Naive thymus-derived CD4-positive, alpha-beta T cell (primary cell): ENCODE measurements at regions of chr7 and their contacts with region 1.

Region 1: DNA sequence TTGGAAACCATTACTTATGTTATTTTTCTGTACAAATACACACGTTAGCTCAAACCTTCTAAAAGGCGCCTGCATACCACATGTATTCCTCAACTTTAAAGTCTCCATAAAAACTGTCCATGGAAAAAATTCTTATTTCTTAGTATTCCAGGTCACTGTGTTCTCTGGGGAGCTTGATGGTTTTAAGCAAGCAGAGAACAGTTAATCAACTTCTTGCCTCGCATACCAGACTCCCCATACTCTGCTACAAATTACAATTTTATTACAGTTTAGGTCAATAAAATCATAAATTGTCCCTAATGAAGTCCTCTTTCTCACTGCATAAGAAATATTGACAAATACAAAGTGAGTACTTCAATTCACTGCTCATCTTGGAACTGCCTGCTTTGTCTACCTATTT is 77.0 kb upstream of the GPR22 start:
- DNase-seq: no peak
- ATAC-seq: no peak
- H3K4me3 ChIP-seq: no peak overlapping the region
- H3K4me3 Mint-ChIP-seq: no peak overlapping the region
- H3K27ac ChIP-seq: no peak overlapping the region
- H3K27ac Mint-ChIP-seq: no peak overlapping the region
- H3K4me1 ChIP-seq: no peaks in the 10 kb centered on the region
- H3K4me1 Mint-ChIP-seq: peaks cover 0 to 5% (median 0%) of the 10 kb centered on the region in 7 donors
- H3K27me3 ChIP-seq: no peaks in the 10 kb centered on the region
- H3K27me3 Mint-ChIP-seq: no peaks in the 10 kb centered on the region

Region 2: DNA sequence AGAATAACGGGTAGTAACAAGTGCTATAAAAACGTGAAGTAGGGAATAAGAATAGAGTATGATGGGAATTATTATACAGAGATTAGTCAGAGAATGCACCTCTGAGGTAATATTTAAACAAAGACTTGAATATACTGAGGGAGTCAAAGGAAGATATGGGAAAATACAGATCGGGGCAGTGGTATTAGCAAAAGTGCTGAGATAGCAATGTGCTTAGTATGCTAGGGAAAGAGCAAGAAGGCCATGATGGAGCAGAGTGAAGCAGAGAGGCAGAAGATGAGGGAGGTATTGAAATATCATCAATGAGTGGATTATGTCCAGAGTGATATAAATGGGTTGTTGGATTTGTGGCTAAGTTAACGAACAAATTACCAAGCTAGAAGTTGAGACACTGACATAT is 19.5 kb before region 1 on chr7:
- CTCF ChIA-PET with region 1: no interaction called
- POLR2A ChIA-PET with region 1: no interaction called
- intact Hi-C with region 1: loop called in 1 of 2 experiments (anchors 1 kb)
- DNase-seq: no peak
- ATAC-seq: no peak
- H3K4me3 ChIP-seq: no peak overlapping the region
- H3K4me3 Mint-ChIP-seq: no peak overlapping the region
- H3K27ac ChIP-seq: no peak overlapping the region
- H3K27ac Mint-ChIP-seq: peak overlapping the region in 1 of 9 donors; percentile 21
- H3K4me1 ChIP-seq: no peaks in the 10 kb centered on the region
- H3K4me1 Mint-ChIP-seq: peaks cover 0 to under 1% (median 0%) of the 10 kb centered on the region in 7 donors
- H3K27me3 ChIP-seq: no peaks in the 10 kb centered on the region
- H3K27me3 Mint-ChIP-seq: no peaks in the 10 kb centered on the region